Natural killer cell (primary cell): ENCODE measurements at regions of chr2 and their contacts with region 1.

Region 1: GRCh38 chr2:96554293-96555145 is 18.0 kb downstream of the ARID5A start:
- DNase-seq: peak; percentile 66 to 88
- ATAC-seq: peak; percentile 79 to 92 (median 80)
- H3K4me3 ChIP-seq: no peak overlapping the region
- H3K4me3 Mint-ChIP-seq: no peak overlapping the region
- H3K27ac ChIP-seq: no peak overlapping the region
- H3K27ac Mint-ChIP-seq: peak overlapping the region in 1 of 2 donors; percentile 38
- H3K4me1 ChIP-seq: peaks cover 17% of the 10 kb centered on the region
- H3K4me1 Mint-ChIP-seq: peaks cover 5 to 32% of the 10 kb centered on the region in 2 donors
- H3K27me3 ChIP-seq: no peaks in the 10 kb centered on the region
- H3K27me3 Mint-ChIP-seq: no peaks in the 10 kb centered on the region
- CTCF ChIP-seq: peak; percentile 100

Region 2: GRCh38 chr2:96407041-96407918 is 147.2 kb before region 1 on chr2:
- intact Hi-C with region 1: loop called (anchors 1 kb)
- DNase-seq: peak; percentile 50 to 93
- ATAC-seq: peak; percentile 86 to 90 (median 87)
- H3K4me3 ChIP-seq: no peak overlapping the region
- H3K4me3 Mint-ChIP-seq: peak overlapping the region; percentile 84
- H3K27ac ChIP-seq: peak overlapping the region; percentile 44
- H3K27ac Mint-ChIP-seq: peak overlapping the region; percentile 76 to 79
- H3K4me1 ChIP-seq: peaks cover 17% of the 10 kb centered on the region
- H3K4me1 Mint-ChIP-seq: peaks cover 20 to 22% of the 10 kb centered on the region in 2 donors
- H3K27me3 ChIP-seq: no peaks in the 10 kb centered on the region
- H3K27me3 Mint-ChIP-seq: no peaks in the 10 kb centered on the region
- CTCF ChIP-seq: peak; percentile 68

Region 3: DNA sequence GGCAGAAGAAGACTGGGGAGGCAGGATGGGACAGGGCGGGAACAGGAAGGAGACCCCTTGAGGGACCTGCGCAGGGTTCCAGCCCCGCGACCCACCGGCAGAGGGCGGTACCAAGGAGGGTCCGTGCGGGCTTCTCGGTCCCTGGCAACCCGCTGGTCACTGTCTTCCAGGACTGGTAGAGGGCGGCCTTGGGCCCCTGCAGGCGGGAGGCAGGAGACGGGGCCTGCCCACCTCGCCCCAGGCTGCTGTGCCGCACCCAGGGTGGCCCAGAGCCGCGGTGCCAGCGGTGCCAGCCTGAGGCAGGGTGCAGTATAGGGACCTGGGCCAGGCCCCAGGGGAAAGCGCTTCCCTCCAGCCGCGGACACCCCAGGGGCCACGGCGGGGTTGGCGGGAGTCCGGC is 83.9 kb before region 1 on chr2:
- intact Hi-C with region 1: loop called (anchors 1 kb)
- DNase-seq: peak; percentile 52 to 65
- ATAC-seq: peak; percentile 54 to 86 (median 77)
- H3K4me3 ChIP-seq: no peak overlapping the region
- H3K4me3 Mint-ChIP-seq: peak overlapping the region; percentile 30
- H3K27ac ChIP-seq: no peak overlapping the region
- H3K27ac Mint-ChIP-seq: no peak overlapping the region
- H3K4me1 ChIP-seq: peaks cover 6% of the 10 kb centered on the region
- H3K4me1 Mint-ChIP-seq: peaks cover 4 to 6% of the 10 kb centered on the region in 2 donors
- H3K27me3 ChIP-seq: peaks cover 3% of the 10 kb centered on the region
- H3K27me3 Mint-ChIP-seq: peaks cover 8 to 9% of the 10 kb centered on the region in 2 donors
- CTCF ChIP-seq: peak; percentile 64

Region 4: GRCh38 chr2:96527286-96528005 is 27.1 kb before region 1 on chr2:
- intact Hi-C with region 1: loop called (anchors 1 kb)
- DNase-seq: peak; percentile 43 to 71
- ATAC-seq: peak; percentile 36 to 66 (median 41)
- H3K4me3 ChIP-seq: peak overlapping the region; percentile 56
- H3K4me3 Mint-ChIP-seq: peak overlapping the region; percentile 81
- H3K27ac ChIP-seq: peak overlapping the region; percentile 37
- H3K27ac Mint-ChIP-seq: peak overlapping the region; percentile 48 to 60
- H3K4me1 ChIP-seq: peaks cover 51% of the 10 kb centered on the region
- H3K4me1 Mint-ChIP-seq: peaks cover 28 to 47% of the 10 kb centered on the region in 2 donors
- H3K27me3 ChIP-seq: no peaks in the 10 kb centered on the region
- H3K27me3 Mint-ChIP-seq: peaks cover 0 to 6% of the 10 kb centered on the region in 2 donors
- CTCF ChIP-seq: peak; percentile 37